ENCODE measurements at regions of chr9 and their contacts with region 1.

Region 1: GRCh38 chr9:92790542-92791527 is 26.2 kb upstream of the BICD2 start:
- DNase-seq: peak; percentile 69 to 73
- ATAC-seq: peak; percentile 98 to 99
- H3K4me3 ChIP-seq: no peak overlapping the region
- H3K27ac ChIP-seq: no peak overlapping the region
- H3K4me1 ChIP-seq: no peaks in the 10 kb centered on the region
- CTCF ChIP-seq: peak; percentile 89
- EP300 ChIP-seq: no peak
- POLR2A ChIP-seq: no peak
- RAD21 ChIP-seq: peak; percentile 89 to 92

Region 2: GRCh38 chr9:92133949-92134604 is 656.8 kb before region 1 on chr9:
- CTCF ChIA-PET with region 1: interaction called, 61 read pairs
- POLR2A ChIA-PET with region 1: no interaction called
- DNase-seq: peak; percentile 85 to 88
- ATAC-seq: peak; percentile 78 to 89
- H3K4me3 ChIP-seq: peak overlapping the region; percentile 19; the same call in 1 of the 3 replicates
- H3K27ac ChIP-seq: peak overlapping the region; percentile 37 to 73; a peak in 4 of 6 replicates
- H3K4me1 ChIP-seq: peaks cover 5% of the 10 kb centered on the region; the same call in 1 of the 3 replicates
- CTCF ChIP-seq: peak; percentile 85
- EP300 ChIP-seq: no peak
- POLR2A ChIP-seq: no peak
- RAD21 ChIP-seq: peak; percentile 86 to 89

Region 3: DNA sequence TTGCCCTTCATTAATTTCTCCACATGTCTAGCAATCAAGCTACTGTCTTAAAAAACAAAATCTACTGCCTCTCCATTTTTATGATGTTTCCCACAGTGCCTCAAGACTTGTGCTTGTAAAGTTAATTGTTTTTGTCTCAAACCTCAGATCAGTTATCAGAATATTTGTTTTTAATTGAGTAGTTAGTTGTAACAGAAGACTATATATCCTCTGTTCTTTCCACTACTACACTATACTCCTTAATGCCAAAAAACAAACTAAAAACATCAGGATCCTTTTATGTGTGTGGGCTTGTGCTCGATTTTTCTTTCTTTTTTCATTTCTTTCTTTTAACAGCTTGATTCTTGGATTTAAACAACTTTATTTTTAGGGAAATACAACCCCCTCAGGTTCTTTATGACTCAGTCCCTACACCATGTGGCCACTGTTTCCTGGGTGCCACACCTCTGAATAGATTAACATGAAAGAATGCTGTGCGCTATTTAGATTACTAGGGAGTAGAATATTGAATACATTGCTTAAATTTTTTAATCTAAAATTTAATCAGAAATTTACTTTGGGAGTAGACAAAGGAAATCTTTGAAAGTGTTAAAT is 309.7 kb before region 1 on chr9:
- CTCF ChIA-PET with region 1: no interaction called
- POLR2A ChIA-PET with region 1: no interaction called
- DNase-seq: no peak
- ATAC-seq: no peak
- H3K4me3 ChIP-seq: no peak overlapping the region
- H3K27ac ChIP-seq: no peak overlapping the region
- H3K4me1 ChIP-seq: peaks cover 6% of the 10 kb centered on the region; the same call in 2 of the 3 replicates
- CTCF ChIP-seq: no peak
- EP300 ChIP-seq: no peak
- POLR2A ChIP-seq: no peak
- RAD21 ChIP-seq: no peak

Region 4: DNA sequence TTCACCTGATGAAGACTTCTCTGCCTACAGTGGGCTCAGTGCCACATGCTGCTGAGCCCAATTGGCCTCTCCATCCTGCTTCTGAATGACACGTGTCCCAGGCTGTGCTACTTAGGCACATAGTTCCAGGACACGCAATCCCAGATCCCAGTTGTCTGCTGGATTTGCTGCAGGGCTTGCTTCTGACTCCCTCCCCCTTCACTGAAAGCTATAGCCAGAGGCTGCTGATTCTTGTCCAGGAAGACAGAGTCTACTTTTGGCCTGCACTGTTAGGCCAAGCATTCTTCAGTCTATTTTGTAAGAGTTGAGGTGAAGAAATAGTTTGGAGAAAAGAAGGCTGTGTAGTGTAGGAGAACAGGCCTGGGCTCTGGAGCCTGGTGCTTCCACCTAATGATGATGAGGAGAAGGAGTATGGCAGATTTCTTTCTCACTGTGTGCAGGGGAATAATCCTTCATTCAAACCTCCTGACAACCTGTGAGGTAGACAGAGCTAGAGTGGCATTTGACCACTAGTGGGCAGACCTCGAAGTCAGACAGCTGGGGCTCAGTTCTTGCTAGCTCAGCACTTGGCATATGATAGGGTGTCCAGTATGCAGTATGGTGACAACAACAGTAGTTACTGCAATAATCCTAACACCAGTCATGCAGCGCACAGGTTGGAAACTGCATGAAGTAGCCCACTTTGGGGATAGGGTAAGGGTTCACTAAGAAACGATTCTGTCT is 289.0 kb before region 1 on chr9:
- CTCF ChIA-PET with region 1: no interaction called
- POLR2A ChIA-PET with region 1: no interaction called
- DNase-seq: peak; percentile 43 to 65
- ATAC-seq: peak; percentile 89 to 93
- H3K4me3 ChIP-seq: no peak overlapping the region
- H3K27ac ChIP-seq: no peak overlapping the region
- H3K4me1 ChIP-seq: peaks cover 19% of the 10 kb centered on the region
- CTCF ChIP-seq: peak; percentile 54
- EP300 ChIP-seq: no peak
- POLR2A ChIP-seq: no peak
- RAD21 ChIP-seq: peak; percentile 30 to 42; a peak in 2 of 5 replicates

Region 5: GRCh38 chr9:92716557-92716956 is 74.3 kb before region 1 on chr9:
- CTCF ChIA-PET with region 1: interaction called, 138 read pairs
- POLR2A ChIA-PET with region 1: interaction called, 7 read pairs
- DNase-seq: peak; percentile 42 to 73
- ATAC-seq: peak; percentile 69 to 90
- H3K4me3 ChIP-seq: no peak overlapping the region
- H3K27ac ChIP-seq: no peak overlapping the region
- H3K4me1 ChIP-seq: no peaks in the 10 kb centered on the region
- CTCF ChIP-seq: peak; percentile 80
- EP300 ChIP-seq: no peak
- POLR2A ChIP-seq: no peak
- RAD21 ChIP-seq: peak; percentile 66 to 74

Region 6: DNA sequence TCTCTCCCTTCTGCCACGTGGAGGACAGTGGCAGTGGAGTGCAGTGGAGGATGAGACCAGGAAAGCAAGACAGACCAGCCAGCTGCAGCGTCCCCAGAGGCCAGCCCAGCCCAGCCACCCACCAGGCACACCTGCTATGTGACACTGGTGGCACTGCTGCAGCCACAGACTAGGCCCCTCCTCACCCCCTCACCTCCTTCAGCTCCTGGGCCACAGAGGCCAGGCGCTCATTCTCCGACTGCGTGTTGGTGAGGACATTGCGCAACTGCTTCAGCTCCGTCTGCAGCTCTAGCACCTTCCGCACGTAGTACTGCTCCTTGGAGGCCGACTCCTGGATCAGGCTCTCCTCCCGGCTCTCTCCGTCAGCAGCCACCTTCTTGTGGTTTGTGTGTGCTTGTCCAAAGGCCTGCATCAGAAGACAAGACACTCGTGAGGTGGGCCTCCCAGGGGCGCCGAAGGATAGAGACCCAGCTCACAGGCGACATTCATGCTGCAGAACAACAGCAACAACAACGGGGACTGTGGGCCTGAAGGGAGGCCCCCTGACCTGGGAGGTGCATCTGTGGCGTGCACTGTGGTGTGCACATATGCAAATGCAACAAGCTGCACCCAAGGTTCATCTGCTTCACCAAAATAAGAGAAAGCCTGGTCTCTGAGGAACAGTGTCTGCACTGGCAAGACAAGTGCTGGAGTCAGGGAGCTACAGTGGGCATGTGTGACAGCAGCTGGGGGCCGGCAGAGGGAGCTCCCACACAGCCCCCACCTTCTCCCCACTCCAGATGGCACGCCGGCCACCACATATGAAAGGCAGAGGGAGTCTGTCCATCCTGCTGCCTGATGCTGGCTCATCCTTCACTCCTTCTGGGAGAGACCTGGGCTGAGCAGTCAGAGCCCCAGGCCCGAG is 61.8 kb before region 1 on chr9:
- CTCF ChIA-PET with region 1: interaction called, 10 read pairs
- POLR2A ChIA-PET with region 1: no interaction called
- DNase-seq: no peak
- ATAC-seq: peak in 1 of 2 experiments; percentile 81; a peak in 4 of 6 replicates
- H3K4me3 ChIP-seq: no peak overlapping the region
- H3K27ac ChIP-seq: no peak overlapping the region
- H3K4me1 ChIP-seq: no peaks in the 10 kb centered on the region
- CTCF ChIP-seq: no peak
- EP300 ChIP-seq: no peak
- POLR2A ChIP-seq: no peak
- RAD21 ChIP-seq: no peak

Region 7: DNA sequence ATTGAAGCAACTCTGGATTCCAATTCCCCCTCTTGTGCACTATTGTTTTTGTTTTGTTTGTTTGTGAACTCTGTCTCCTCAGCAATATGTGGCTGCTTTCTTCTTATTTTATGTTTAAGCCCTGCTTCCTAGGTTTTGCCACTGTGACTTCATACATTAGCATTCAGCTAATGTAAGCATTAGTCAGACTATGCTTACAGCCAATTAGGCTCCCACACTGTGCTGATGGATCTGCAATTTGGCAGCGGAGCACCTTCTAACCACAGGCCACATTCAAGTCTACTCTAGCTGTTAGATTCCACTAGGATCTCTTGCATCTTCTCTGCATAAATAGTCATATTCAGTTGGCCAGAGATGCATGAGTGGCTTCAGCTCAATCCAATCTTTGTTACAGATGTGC is 16.6 kb before region 1 on chr9:
- CTCF ChIA-PET with region 1: interaction called, 17 read pairs
- POLR2A ChIA-PET with region 1: no interaction called
- DNase-seq: no peak
- ATAC-seq: no peak
- H3K4me3 ChIP-seq: no peak overlapping the region
- H3K27ac ChIP-seq: no peak overlapping the region
- H3K4me1 ChIP-seq: no peaks in the 10 kb centered on the region
- CTCF ChIP-seq: no peak
- EP300 ChIP-seq: no peak
- POLR2A ChIP-seq: no peak
- RAD21 ChIP-seq: no peak

Region 8: GRCh38 chr9:92780206-92780605 is 10.6 kb before region 1 on chr9:
- CTCF ChIA-PET with region 1: interaction called, 24 read pairs
- POLR2A ChIA-PET with region 1: no interaction called
- DNase-seq: no peak
- ATAC-seq: no peak
- H3K4me3 ChIP-seq: no peak overlapping the region
- H3K27ac ChIP-seq: no peak overlapping the region
- H3K4me1 ChIP-seq: no peaks in the 10 kb centered on the region
- CTCF ChIP-seq: no peak
- EP300 ChIP-seq: no peak
- POLR2A ChIP-seq: no peak
- RAD21 ChIP-seq: no peak

Region 9: GRCh38 chr9:92808726-92809451 is 18.1 kb after region 1 on chr9:
- CTCF ChIA-PET with region 1: interaction called, 10 read pairs
- POLR2A ChIA-PET with region 1: no interaction called
- DNase-seq: peak; percentile 41 to 58
- ATAC-seq: peak; percentile 71 to 82
- H3K4me3 ChIP-seq: peak overlapping the region; percentile 39
- H3K27ac ChIP-seq: no peak overlapping the region
- H3K4me1 ChIP-seq: peaks cover 22% of the 10 kb centered on the region
- CTCF ChIP-seq: no peak; the same call in 1 of the 3 replicates
- EP300 ChIP-seq: no peak
- POLR2A ChIP-seq: no peak
- RAD21 ChIP-seq: no peak